IMR-90 (cell line): ENCODE measurements at regions of chr19 and their contacts with region 1.

Region 1: DNA sequence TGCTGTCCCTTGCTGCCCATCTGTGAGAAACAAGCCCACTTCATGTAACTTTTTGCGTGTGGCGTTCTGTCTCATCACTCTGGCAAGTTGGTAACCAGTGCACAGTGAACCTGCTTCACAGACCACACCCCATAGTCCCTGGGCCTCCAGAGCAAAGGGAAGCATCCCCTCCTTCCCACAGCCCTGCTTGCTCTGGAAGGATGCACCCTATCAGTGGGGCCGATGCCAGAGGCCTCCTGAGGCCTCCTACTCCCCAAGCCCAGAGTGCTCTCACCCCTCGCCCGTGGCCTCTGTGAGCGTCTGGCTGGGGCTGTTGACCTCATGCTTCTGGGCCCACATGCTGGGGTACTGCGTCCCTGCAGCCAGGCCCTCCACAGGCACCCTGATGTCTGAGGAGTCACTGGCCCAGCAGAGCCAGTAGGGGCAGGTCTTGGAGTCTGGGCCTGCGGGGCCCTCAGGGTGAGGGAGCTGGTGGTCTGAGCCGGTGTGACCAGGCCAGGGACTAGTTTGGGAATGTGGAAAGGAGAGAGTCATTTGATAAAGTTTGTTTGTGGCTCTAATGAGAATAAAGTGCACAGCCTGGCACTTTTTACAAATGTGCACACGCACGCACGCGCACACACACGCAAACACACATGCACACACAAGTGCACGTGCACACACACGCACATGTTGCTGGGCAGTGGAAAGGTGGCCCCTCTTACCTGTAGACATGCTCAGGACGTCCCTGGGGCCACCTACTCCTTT is 5.1 kb downstream of the TMEM86B start:
- DNase-seq: no peak
- ATAC-seq: no peak; the same call in 1 of the 2 replicates
- H3K4me3 ChIP-seq: no peak overlapping the region
- H3K27ac ChIP-seq: no peak overlapping the region
- H3K4me1 ChIP-seq: no peaks in the 10 kb centered on the region
- H3K27me3 ChIP-seq: no peaks in the 10 kb centered on the region
- CTCF ChIP-seq: no peak
- POLR2A ChIP-seq: no peak
- RAD21 ChIP-seq: no peak

Region 2: GRCh38 chr19:54916822-54917221 is 306.6 kb before region 1 on chr19:
- CTCF ChIA-PET with region 1: no interaction called
- POLR2A ChIA-PET with region 1: no interaction called
- dilution Hi-C with region 1: no loop called
- in situ Hi-C with region 1: no loop called
- intact Hi-C with region 1: no loop called
- DNase-seq: no peak
- ATAC-seq: no peak
- H3K4me3 ChIP-seq: no peak overlapping the region
- H3K27ac ChIP-seq: no peak overlapping the region
- H3K4me1 ChIP-seq: no peaks in the 10 kb centered on the region
- H3K27me3 ChIP-seq: no peaks in the 10 kb centered on the region
- CTCF ChIP-seq: no peak
- POLR2A ChIP-seq: no peak
- RAD21 ChIP-seq: no peak

Region 3: DNA sequence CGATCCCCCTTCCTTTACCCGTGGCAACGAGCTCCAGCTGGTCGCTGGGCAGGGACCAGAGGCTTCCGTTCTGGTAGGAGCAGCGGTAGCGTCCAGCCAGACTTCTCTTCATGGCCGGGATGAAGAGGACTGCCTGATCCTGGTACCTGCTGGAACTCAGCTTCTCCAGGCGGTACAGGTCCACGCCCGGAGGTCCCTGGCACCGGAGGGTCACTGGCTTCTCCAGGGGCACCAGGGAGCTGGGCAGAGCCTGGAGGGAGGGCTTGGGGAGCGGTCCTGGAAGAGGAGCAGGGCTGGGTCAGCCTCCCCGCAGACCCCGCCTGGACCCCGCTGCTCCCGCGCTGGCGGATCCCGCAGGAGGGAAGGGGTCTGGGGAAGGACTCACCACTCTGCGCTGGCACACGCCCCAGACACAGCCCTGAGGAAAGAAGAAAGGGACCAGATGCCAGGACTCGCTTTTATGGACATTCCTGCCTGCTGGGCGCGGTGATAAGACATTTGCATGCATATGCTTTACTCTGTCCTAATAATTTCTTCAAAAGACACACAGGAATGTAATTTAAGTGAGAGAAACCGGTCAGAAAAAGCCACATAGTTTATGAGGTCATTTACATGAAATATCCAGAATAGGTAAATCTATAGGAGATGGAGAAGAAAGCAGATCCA is 191.2 kb before region 1 on chr19:
- CTCF ChIA-PET with region 1: no interaction called
- POLR2A ChIA-PET with region 1: no interaction called
- dilution Hi-C with region 1: no loop called
- in situ Hi-C with region 1: no loop called
- intact Hi-C with region 1: no loop called
- DNase-seq: no peak
- ATAC-seq: no peak
- H3K4me3 ChIP-seq: no peak overlapping the region
- H3K27ac ChIP-seq: no peak overlapping the region
- H3K4me1 ChIP-seq: no peaks in the 10 kb centered on the region
- H3K27me3 ChIP-seq: no peaks in the 10 kb centered on the region
- CTCF ChIP-seq: no peak
- POLR2A ChIP-seq: no peak
- RAD21 ChIP-seq: no peak

Region 4: DNA sequence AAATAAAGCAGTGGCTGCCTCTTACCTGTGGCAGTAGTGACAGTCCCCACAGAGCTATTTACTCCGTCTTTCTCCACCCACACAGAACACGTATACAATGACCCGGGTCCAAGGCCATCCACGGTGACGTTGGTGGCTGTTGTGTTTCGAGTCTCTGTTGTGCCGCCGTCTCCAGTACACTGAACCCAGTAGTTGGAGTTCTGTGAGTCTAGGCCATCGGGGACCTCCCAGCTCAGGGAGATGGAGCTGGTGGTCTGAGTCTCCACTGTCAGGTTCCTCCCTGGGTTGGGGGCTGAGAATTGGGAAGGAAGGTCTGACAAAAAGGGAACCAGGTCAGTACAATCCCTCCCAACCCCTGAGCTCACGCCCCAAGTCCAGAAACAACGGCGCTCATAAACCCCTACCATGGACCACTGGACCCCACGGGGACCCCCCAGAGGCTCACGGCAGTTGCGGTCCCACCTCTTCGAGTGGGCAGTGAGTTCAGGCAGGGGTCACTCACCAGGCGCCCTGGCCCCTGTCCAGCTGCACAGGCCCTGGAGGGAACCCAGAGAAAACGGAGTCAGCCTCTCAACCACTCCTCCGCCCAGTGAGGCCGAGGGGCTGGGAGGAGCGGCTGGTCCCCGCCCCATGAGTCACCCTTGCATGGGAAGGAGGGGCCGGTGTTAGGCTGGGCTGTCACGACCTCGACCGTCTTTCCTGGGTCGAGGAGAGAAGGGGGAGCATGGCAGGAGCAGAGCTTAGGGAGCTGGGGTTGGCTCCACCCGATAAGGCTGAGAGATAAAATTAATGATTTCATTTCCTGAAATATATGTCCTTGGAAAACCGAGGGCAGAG is 16.6 kb before region 1 on chr19:
- CTCF ChIA-PET with region 1: no interaction called
- POLR2A ChIA-PET with region 1: no interaction called
- dilution Hi-C with region 1: no loop called
- in situ Hi-C with region 1: no loop called
- intact Hi-C with region 1: no loop called
- DNase-seq: peak; percentile 86
- ATAC-seq: peak; percentile 97
- H3K4me3 ChIP-seq: no peak overlapping the region
- H3K27ac ChIP-seq: peak overlapping the region; percentile 21
- H3K4me1 ChIP-seq: peaks cover 21% of the 10 kb centered on the region
- H3K27me3 ChIP-seq: no peaks in the 10 kb centered on the region
- CTCF ChIP-seq: no peak
- POLR2A ChIP-seq: peak; percentile 67
- RAD21 ChIP-seq: no peak

Region 5: GRCh38 chr19:55247608-55248099 is 24.2 kb after region 1 on chr19:
- CTCF ChIA-PET with region 1: no interaction called
- POLR2A ChIA-PET with region 1: no interaction called
- dilution Hi-C with region 1: no loop called
- in situ Hi-C with region 1: no loop called
- intact Hi-C with region 1: no loop called
- DNase-seq: no peak
- ATAC-seq: no peak
- H3K4me3 ChIP-seq: no peak overlapping the region
- H3K27ac ChIP-seq: no peak overlapping the region
- H3K4me1 ChIP-seq: 0 out of 2 replicates have a peak, but pooled peaks cover 1% of the 10 kb centered on the region
- H3K27me3 ChIP-seq: no peaks in the 10 kb centered on the region
- CTCF ChIP-seq: no peak
- POLR2A ChIP-seq: no peak
- RAD21 ChIP-seq: no peak

Region 6: DNA sequence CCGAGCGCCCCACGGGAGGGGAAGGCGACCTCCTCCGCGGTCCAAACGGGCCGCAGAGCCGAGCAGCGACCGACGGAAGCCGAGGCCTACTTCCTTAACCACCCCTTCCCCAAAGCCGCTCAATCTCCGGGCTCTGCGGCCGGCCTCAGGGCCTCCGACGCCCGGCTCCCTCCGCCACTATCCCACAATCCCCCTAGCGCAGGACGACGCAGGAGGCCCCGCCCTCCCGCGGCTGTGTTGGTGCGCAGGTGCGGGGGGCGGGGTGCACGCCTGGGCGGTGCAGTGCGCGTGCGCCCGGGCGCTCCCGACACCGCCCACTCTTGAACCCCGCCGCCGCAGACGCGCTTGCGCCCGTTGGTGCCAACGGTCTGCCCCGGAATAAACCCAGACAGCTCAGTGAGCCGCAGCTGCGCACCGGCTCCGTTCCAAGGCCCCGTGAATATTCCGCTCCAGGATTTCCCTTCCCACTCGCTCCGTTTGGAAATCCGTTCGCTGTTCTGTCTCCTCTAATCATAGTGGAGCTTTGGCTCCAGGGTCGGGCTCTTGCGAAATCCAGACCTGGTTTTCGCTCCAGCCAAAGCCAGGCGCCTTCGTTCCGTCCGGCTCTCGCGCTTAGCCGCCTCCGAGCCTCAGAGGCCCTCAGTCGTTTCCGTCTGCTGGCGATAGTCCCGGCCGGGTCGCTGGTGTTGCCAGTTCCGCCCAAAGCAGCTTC is 35.5 kb after region 1 on chr19 and contains the start of gene PPP6R1:
- CTCF ChIA-PET with region 1: no interaction called
- POLR2A ChIA-PET with region 1: interaction called, 4 read pairs
- dilution Hi-C with region 1: no loop called
- in situ Hi-C with region 1: loop called (anchors 5 kb)
- intact Hi-C with region 1: no loop called
- DNase-seq: peak; percentile 100
- ATAC-seq: peak; percentile 94
- H3K4me3 ChIP-seq: peak within 1 kb of the TSS; percentile 68
- H3K27ac ChIP-seq: peak within 1 kb of the TSS; percentile 88
- H3K4me1 ChIP-seq: peaks cover 16% of the 10 kb centered on the region
- H3K27me3 ChIP-seq: no peaks in the 10 kb centered on the region
- CTCF ChIP-seq: no peak
- POLR2A ChIP-seq: peak; percentile 90
- RAD21 ChIP-seq: peak; percentile 37
- total RNA-seq, gene PPP6R1: 19.9 and 20.0 TPM in 2 replicates